WTC11 (cell line): ENCODE measurements at regions of chr5 and their contacts with region 1.

Region 1: DNA sequence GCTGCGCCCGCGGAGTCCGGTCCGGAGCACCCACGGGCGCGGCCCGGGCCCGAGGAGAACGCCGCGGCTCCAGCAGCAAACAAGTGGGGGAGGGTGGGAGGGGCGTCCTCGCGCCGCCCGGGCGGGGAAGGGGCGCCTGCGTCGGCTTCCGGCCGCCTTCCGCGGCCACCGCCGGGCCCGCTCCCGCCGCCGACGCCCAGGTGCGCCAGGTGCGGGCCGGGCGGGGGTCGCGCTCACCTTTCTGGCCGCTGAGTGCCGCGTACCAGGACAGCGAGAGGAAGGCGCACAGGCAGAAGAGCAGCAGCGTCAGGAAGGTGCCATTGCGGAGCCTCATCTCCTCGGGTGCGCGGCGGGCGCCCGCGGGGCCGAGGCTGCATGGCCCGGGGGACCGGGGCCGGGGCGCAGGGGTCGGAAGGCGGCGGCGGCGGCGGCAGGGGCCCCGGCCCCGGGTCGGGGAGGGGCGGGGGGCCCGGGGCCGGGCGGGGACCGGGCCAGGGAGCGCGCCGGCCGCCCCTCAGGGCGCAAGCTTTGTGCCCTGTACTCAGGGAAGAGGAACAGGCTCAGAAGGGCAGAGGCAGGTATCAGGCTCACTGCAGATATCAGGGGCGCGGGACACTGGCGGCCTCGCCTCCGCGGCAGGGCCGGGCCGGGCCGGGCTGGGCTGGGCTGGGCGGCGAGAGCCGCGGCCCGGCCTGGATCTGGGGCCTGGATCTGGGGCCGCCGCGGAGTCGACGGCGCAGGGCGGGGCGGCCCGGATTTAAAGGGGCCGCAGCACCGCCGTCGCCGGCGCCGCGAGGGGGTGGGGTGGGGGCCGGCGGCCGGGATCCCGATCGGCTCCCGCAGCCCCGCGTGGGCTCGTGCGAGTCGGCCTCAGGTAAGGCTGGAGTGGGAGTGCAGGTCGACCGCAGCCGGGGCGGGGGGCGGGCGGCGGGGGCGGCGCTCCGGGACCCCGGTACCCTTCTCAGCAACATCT is at the start of gene MGAT4B:
- DNase-seq: peak; percentile 74
- ATAC-seq: peak; percentile 70
- H3K4me3 Mint-ChIP-seq: peak within 1 kb of the TSS; percentile 75
- H3K27ac Mint-ChIP-seq: no peak within 1 kb of the TSS
- H3K4me1 Mint-ChIP-seq: peaks cover 36% of the 10 kb centered on the region
- H3K27me3 Mint-ChIP-seq: peaks cover 6% of the 10 kb centered on the region
- CTCF ChIP-seq: no peak
- total RNA-seq, gene MGAT4B: 127 to 151 TPM (median 135 TPM) in 3 replicates

Region 2: DNA sequence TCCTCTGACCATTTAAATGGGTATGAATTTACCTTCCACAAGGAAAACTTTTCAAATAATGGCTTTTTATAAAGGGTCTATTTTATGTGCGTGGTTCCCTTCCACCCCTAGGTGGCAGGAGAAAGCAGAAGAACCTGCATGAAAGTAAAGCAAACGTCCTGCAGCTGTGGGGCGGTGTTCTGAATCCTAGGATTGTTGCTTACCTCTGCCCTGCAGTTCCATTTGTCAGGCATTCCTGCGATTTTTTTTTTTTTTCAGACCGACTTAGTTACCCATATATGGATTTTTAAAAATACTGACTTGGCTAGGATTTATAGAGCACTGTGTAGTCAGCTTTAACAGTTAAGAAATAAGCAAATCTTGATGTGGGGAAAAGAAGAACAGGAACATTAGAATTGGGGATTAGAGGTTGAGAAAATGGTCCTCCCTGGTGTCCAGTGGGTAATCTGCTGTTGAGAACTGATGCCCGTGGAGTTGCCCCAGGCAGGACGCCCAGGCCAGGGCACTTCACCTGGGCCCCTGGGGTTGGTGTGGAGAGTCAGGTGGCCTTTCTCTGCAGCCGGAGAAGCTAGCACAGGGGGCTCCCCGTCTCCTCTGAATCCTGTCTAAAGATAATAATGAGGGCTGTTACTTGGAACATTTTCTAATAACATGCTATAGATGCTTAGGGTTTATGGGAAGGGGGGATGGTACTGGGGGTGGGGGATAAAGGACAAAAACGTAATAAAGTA is 43.2 kb before region 1 on chr5:
- CTCF ChIA-PET with region 1: interaction called, 12 read pairs
- POLR2A ChIA-PET with region 1: no interaction called
- DNase-seq: peak; percentile 63
- ATAC-seq: peak; percentile 82
- H3K4me3 Mint-ChIP-seq: no peak overlapping the region
- H3K27ac Mint-ChIP-seq: peak overlapping the region; percentile 86
- H3K4me1 Mint-ChIP-seq: peaks cover 41% of the 10 kb centered on the region
- H3K27me3 Mint-ChIP-seq: no peaks in the 10 kb centered on the region
- CTCF ChIP-seq: peak; percentile 64

Region 3: GRCh38 chr5:179821581-179822432 is 15.3 kb after region 1 on chr5:
- CTCF ChIA-PET with region 1: interaction called, 20 read pairs
- POLR2A ChIA-PET with region 1: interaction called, 9 read pairs
- DNase-seq: peak; percentile 76
- ATAC-seq: peak; percentile 68
- H3K4me3 Mint-ChIP-seq: peak overlapping the region; percentile 87
- H3K27ac Mint-ChIP-seq: peak overlapping the region; percentile 63; the same call in 1 of the 2 replicates
- H3K4me1 Mint-ChIP-seq: peaks cover 33% of the 10 kb centered on the region
- H3K27me3 Mint-ChIP-seq: peaks cover 11% of the 10 kb centered on the region
- CTCF ChIP-seq: no peak

Region 4: DNA sequence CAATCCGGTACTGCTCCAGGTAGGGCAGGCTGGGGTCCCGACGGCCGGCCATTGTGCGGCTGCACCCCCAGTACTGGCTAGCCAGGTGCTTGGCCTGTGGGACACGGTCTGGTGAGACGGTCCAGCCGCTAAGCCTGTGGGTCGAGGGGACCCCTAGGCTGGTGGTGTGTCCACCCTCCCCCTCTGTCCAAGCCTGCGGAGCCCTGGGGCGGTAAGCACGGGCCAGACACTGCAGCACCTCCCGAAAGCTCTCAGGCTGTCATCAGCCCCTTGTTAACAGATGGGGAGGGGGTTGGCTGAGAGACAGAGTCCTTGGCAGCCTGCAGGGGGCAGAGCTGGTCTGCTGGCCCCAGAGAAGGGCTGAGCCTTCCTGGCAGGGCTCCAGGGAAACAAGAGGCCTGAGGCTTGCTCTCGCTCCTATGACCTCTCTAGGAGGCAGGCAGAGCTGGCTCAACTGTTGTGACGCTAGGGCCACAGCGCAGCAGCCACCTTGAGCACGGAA is 63.9 kb after region 1 on chr5:
- CTCF ChIA-PET with region 1: interaction called, 17 read pairs
- POLR2A ChIA-PET with region 1: no interaction called
- DNase-seq: no peak
- ATAC-seq: peak; percentile 40
- H3K4me3 Mint-ChIP-seq: no peak overlapping the region
- H3K27ac Mint-ChIP-seq: peak overlapping the region; percentile 70
- H3K4me1 Mint-ChIP-seq: peaks cover 2% of the 10 kb centered on the region; the same call in 1 of the 2 replicates
- H3K27me3 Mint-ChIP-seq: no peaks in the 10 kb centered on the region
- CTCF ChIP-seq: no peak

Region 5: DNA sequence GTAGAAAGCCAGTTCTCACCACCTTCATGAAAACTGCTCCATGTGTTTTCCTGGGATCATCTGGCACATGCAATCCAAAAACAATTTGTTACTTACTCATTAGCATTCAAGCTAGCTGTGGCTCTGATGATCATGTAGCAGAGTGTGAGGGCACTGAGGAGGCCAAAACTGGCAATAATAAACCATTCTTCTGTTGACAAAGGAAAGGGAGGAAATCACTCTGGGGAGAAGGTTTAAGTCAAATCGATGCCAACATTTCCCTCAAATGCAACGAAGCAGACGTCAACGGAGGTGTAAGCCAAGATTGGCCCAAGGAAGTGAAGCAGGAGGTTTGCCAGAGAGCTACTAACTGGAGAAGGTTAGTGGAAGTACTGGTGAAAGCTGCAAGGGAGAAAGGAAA is 156.8 kb after region 1 on chr5:
- CTCF ChIA-PET with region 1: no interaction called
- POLR2A ChIA-PET with region 1: no interaction called
- DNase-seq: no peak
- ATAC-seq: no peak
- H3K4me3 Mint-ChIP-seq: no peak overlapping the region
- H3K27ac Mint-ChIP-seq: no peak overlapping the region
- H3K4me1 Mint-ChIP-seq: peaks cover 5% of the 10 kb centered on the region
- H3K27me3 Mint-ChIP-seq: no peaks in the 10 kb centered on the region
- CTCF ChIP-seq: no peak

Region 6: GRCh38 chr5:179974946-179975712 is 168.6 kb after region 1 on chr5:
- CTCF ChIA-PET with region 1: interaction called, 10 read pairs
- POLR2A ChIA-PET with region 1: no interaction called
- DNase-seq: peak; percentile 72
- ATAC-seq: peak; percentile 98
- H3K4me3 Mint-ChIP-seq: no peak overlapping the region
- H3K27ac Mint-ChIP-seq: peak overlapping the region; percentile 90
- H3K4me1 Mint-ChIP-seq: peaks cover 7% of the 10 kb centered on the region; the same call in 1 of the 2 replicates
- H3K27me3 Mint-ChIP-seq: no peaks in the 10 kb centered on the region
- CTCF ChIP-seq: no peak

Region 7: GRCh38 chr5:179986328-179986727 is 179.8 kb after region 1 on chr5:
- CTCF ChIA-PET with region 1: no interaction called
- POLR2A ChIA-PET with region 1: no interaction called
- DNase-seq: no peak
- ATAC-seq: no peak
- H3K4me3 Mint-ChIP-seq: no peak overlapping the region
- H3K27ac Mint-ChIP-seq: no peak overlapping the region
- H3K4me1 Mint-ChIP-seq: peaks cover 13% of the 10 kb centered on the region
- H3K27me3 Mint-ChIP-seq: no peaks in the 10 kb centered on the region
- CTCF ChIP-seq: no peak